ENCODE measurements at regions of chr9 and their contacts with region 1.

Region 1: DNA sequence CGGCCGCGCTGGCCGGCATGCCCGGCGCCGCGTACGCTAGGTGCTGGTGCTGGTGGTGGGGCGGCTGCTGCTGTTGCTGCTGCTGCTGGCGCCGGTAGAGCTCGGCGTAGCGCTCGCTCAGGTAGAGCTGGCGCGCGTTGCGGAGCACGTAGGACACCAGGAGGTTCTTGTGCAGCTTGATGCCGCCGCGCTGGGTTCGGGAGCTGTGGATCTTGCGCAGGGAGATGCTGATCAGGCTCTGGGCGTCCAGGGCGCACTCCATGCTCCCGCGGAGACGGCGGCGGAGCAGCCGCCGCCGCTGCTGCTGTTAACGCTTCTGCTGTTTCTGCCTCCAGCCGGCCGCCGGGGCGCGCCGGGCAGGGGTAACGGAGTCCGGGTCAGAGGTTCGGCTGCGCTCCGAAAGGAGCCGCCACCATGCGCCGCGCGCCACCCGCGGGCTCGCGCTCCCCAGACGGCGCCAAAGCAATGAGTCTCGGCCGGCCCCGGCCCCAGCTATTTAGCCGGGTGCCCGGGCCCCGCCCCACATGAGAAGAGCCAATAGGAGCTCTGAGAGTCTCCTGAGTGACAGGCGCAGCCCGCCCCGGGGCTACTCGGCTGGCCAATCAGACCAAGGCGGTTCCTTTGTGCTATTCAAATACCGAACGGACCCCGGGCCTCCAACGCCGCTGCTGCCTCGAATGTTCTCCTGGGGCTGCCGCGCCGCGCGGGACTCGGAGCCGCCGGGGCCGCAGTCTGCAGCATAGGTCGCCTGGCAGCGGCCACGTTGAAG is at the start of gene IER5L:
- DNase-seq: peak; percentile 95
- ATAC-seq: peak; percentile 83
- H3K4me3 Mint-ChIP-seq: peak within 1 kb of the TSS; percentile 92
- H3K27ac Mint-ChIP-seq: peak within 1 kb of the TSS; percentile 80
- H3K4me1 Mint-ChIP-seq: peaks cover 17% of the 10 kb centered on the region
- H3K27me3 Mint-ChIP-seq: peaks cover 6% of the 10 kb centered on the region
- total RNA-seq, gene IER5L: 6.0 to 6.1 TPM

Region 2: GRCh38 chr9:129139993-129140396 is 38.0 kb before region 1 on chr9:
- CTCF ChIA-PET with region 1: interaction called, 190 read pairs
- POLR2A ChIA-PET with region 1: interaction called, 8 read pairs
- DNase-seq: peak; percentile 90
- ATAC-seq: peak; percentile 84
- H3K4me3 Mint-ChIP-seq: peak overlapping the region; percentile 75
- H3K27ac Mint-ChIP-seq: peak overlapping the region; percentile 93
- H3K4me1 Mint-ChIP-seq: peaks cover 50% of the 10 kb centered on the region
- H3K27me3 Mint-ChIP-seq: no peaks in the 10 kb centered on the region

Region 3: GRCh38 chr9:129237195-129237611 is 59.2 kb after region 1 on chr9:
- CTCF ChIA-PET with region 1: interaction called, 17 read pairs
- POLR2A ChIA-PET with region 1: interaction called, 24 read pairs
- DNase-seq: peak; percentile 64
- ATAC-seq: peak; percentile 59
- H3K4me3 Mint-ChIP-seq: peak overlapping the region; percentile 74
- H3K27ac Mint-ChIP-seq: peak overlapping the region; percentile 88
- H3K4me1 Mint-ChIP-seq: peaks cover 64% of the 10 kb centered on the region
- H3K27me3 Mint-ChIP-seq: no peaks in the 10 kb centered on the region

Region 4: GRCh38 chr9:129306318-129306973 is 128.5 kb after region 1 on chr9:
- CTCF ChIA-PET with region 1: no interaction called
- POLR2A ChIA-PET with region 1: no interaction called
- DNase-seq: no peak
- ATAC-seq: no peak
- H3K4me3 Mint-ChIP-seq: no peak overlapping the region
- H3K27ac Mint-ChIP-seq: no peak overlapping the region
- H3K4me1 Mint-ChIP-seq: peaks cover 6% of the 10 kb centered on the region
- H3K27me3 Mint-ChIP-seq: peaks cover 10% of the 10 kb centered on the region

Region 5: DNA sequence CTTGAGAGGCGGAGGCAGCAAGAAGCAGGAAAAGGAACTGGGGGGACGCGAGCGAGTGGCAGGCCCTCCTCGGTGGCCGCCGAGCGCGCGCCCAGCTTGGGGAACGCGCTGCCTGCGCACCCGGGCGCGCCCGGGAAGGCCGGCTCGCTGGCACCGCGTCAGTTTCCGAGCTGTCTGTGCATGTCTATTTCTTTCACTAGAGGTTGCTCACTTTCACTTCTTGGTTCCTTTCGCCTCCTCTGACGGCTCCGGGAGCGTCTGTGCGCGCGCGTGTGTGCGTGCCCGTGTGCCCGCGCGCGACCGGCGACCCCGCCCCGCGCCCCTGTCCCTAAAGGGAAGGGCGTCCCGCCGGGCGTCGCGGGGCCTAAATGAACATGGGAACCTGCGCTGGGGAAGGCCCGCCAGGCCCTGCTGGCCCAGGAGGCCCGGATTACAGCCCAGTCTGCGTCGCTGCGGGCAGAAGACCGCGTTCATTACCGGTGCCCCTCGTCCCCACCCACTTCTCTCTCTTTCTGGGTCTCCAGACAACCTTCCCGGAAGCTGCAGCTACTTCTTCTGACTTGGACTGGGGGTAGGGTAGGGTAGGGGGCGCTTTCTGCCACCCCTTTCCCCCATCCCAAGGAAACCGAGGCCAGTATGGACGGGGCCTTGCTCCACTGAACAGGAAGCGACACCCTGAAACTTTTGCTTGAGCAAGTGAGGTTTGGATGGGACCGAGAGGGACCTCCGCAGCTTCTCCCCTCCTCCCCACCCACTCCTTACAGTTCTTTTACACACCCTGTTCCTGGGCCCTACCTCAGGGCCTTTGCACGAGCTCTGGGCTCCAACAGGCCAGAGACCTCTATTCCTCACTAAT is 205.8 kb after region 1 on chr9:
- CTCF ChIA-PET with region 1: interaction called, 19 read pairs
- POLR2A ChIA-PET with region 1: interaction called, 4 read pairs
- DNase-seq: peak; percentile 79
- ATAC-seq: peak; percentile 95
- H3K4me3 Mint-ChIP-seq: peak overlapping the region; percentile 65
- H3K27ac Mint-ChIP-seq: peak overlapping the region; percentile 88
- H3K4me1 Mint-ChIP-seq: peaks cover 25% of the 10 kb centered on the region
- H3K27me3 Mint-ChIP-seq: peaks cover 4% of the 10 kb centered on the region

Region 6: DNA sequence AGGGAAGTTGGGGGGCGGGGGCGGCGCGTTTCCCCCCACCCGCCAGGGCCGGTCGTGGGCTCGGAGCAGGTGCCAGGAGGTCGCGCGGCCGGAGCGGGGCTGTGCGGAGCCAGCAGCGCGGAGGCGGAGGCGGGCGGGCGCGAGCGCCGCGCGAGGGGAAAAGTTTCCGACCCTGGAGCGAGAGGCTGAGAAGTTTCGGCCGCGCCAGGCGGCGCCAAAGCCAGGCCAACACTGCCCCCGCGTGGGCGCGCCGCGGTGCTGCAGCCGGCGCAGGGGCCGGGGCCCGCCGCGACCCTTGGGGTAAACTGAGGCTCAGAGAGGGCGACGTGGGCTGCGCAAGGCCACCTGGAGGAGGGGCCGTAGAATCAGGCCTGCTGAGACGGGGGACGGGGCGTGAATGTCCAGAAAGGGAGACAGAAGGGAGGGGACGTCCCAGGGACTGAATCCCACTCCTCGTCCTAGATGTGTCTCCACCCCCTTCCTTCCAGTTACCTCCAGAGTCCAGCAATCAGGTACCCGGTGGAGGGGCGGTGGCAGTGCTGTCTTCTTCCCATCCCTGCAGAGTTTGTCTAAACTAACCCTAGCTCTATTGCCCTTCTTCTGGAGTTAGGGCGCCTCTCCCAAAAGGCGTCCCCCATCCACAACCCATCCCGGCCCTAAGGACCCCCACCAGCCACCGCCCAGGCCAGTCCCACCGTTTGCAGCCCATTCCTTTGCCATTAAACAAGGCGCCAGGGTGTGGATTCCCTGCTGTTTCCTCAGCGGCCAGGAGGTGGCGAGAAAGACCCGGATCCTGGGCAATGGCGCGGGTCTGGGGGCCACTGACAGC is 432.7 kb after region 1 on chr9:
- CTCF ChIA-PET with region 1: interaction called, 13 read pairs
- POLR2A ChIA-PET with region 1: interaction called, 4 read pairs
- DNase-seq: peak; percentile 79
- ATAC-seq: peak; percentile 78
- H3K4me3 Mint-ChIP-seq: peak overlapping the region; percentile 58
- H3K27ac Mint-ChIP-seq: peak overlapping the region; percentile 43
- H3K4me1 Mint-ChIP-seq: peaks cover 49% of the 10 kb centered on the region
- H3K27me3 Mint-ChIP-seq: peaks cover 2% of the 10 kb centered on the region

Measured in activated CD8-positive, alpha-beta T cell treated with anti-CD3 and anti-CD28 coated beads, Interleukin-2, amount 10 ng/mL, durations not matched to agents 7 days and 5 days (primary cell).